ENCODE measurements at regions of chr18 and their contacts with region 1.

Region 1: DNA sequence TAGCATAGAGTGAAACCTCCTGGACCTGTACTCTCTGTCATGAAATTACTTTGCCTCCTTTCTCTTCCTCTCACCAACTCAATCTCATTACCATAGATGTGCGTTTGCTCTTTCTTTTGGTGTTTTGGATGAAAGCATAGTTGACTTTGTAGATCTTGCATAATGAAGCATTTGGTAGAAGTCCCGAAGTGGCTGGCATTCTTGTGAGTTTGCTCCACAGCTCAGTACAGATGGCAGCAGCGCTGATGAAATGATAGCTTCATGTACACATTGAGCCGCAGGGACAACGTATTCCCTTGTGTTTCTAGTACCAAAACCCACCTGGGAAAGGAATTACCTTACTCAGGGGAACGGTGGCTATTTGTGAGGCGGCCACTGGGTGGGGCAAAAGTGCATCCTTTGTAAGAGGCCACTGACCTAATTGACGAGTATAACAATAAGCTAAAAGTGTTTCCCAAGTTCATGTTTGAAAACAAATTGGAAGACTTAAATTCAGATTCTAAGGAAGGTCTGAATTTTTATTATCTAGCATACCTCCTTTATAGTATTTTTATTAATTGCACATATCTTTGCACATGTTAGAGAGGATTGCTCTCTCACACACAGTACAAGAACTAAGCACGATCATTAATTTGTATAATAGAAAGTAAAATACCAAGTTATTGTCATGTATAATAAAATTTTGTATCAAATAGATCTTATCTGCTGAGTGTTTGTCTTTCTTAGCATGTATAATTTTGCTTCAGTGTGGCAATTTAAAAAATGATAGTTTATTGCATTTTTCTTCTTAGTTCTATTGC is 25.4 kb upstream of the CDH7 start:
- DNase-seq: peak; percentile 50
- H3K4me3 ChIP-seq: no peak overlapping the region; a peak in 1 of 4 replicates
- H3K27ac ChIP-seq: no peak overlapping the region
- H3K4me1 ChIP-seq: no peaks in the 10 kb centered on the region; a peak in 1 of 4 replicates
- H3K27me3 ChIP-seq: no peaks in the 10 kb centered on the region
- CTCF ChIP-seq: peak; percentile 49
- EP300 ChIP-seq: no peak
- RAD21 ChIP-seq: peak; percentile 73

Region 2: GRCh38 chr18:65737471-65737955 is 12.1 kb after region 1 on chr18:
- CTCF ChIA-PET with region 1: interaction called, 12 read pairs
- POLR2A ChIA-PET with region 1: no interaction called
- DNase-seq: no peak
- H3K4me3 ChIP-seq: no peak overlapping the region
- H3K27ac ChIP-seq: no peak overlapping the region
- H3K4me1 ChIP-seq: no peaks in the 10 kb centered on the region; a peak in 1 of 4 replicates
- H3K27me3 ChIP-seq: no peaks in the 10 kb centered on the region
- CTCF ChIP-seq: no peak
- EP300 ChIP-seq: no peak
- RAD21 ChIP-seq: no peak

Region 3: GRCh38 chr18:65753520-65753919 is 28.1 kb after region 1 on chr18:
- CTCF ChIA-PET with region 1: interaction called, 19 read pairs
- POLR2A ChIA-PET with region 1: no interaction called
- DNase-seq: peak; percentile 69
- H3K4me3 ChIP-seq: no peak overlapping the region
- H3K27ac ChIP-seq: no peak overlapping the region
- H3K4me1 ChIP-seq: peaks cover 0 to 5% of the 10 kb centered on the region in 2 experiments; a peak in 2 of 4 replicates
- H3K27me3 ChIP-seq: no peaks in the 10 kb centered on the region
- CTCF ChIP-seq: peak; percentile 48
- EP300 ChIP-seq: no peak
- RAD21 ChIP-seq: peak; percentile 88

Region 4: DNA sequence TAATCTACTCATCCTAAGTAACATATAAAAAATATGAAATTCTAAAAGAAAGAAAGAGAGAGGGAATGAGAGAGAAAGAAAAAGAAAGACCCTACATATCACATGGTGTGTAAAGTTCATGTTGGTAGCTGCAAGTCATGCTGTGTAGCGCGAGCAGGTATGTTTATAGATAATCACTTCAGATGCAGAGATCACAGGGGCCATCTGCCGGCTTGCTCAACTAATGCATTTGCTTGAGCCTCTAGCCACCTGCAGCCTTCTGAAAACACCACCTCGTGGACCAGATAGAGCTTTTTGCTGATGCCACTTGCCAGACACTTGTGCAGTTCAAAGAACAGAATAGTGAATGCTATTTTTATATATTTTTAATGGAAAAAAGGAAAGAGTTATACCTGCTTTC is 62.9 kb after region 1 on chr18:
- CTCF ChIA-PET with region 1: interaction called, 25 read pairs
- POLR2A ChIA-PET with region 1: no interaction called
- DNase-seq: peak; percentile 14
- H3K4me3 ChIP-seq: no peak overlapping the region
- H3K27ac ChIP-seq: no peak overlapping the region
- H3K4me1 ChIP-seq: peaks cover 0 to 4% of the 10 kb centered on the region in 2 experiments; a peak in 2 of 4 replicates
- H3K27me3 ChIP-seq: no peaks in the 10 kb centered on the region
- CTCF ChIP-seq: no peak
- EP300 ChIP-seq: no peak
- RAD21 ChIP-seq: peak; percentile 67